Right lobe of liver (tissue), 6 donors: ENCODE measurements at regions of chr2 and their contacts with region 1.

Region 1: GRCh38 chr2:11482723-11483518 is 17.0 kb upstream of the E2F6 start:
- DNase-seq: peak; percentile 55 to 67 (median 63)
- ATAC-seq: peak; percentile 82 to 86 (median 84)
- H3K4me3 ChIP-seq: peak overlapping the region; percentile 38 to 67 (median 48)
- H3K27ac ChIP-seq: peak overlapping the region in 1 of 3 donors; percentile 37
- H3K4me1 ChIP-seq: no peaks in the 10 kb centered on the region
- H3K27me3 ChIP-seq: no peaks in the 10 kb centered on the region
- CTCF ChIP-seq: no peak
- POLR2A ChIP-seq: no peak

Region 2: GRCh38 chr2:11357428-11357972 is 125.4 kb before region 1 on chr2:
- intact Hi-C with region 1: no loop called
- DNase-seq: peak; percentile 70 to 93 (median 93)
- ATAC-seq: peak; percentile 82 to 93 (median 90)
- H3K4me3 ChIP-seq: no peak overlapping the region
- H3K27ac ChIP-seq: peak overlapping the region in 2 of 3 donors; percentile 43 to 81
- H3K4me1 ChIP-seq: peaks cover 0 to 24% (median 7%) of the 10 kb centered on the region in 4 donors
- H3K27me3 ChIP-seq: no peaks in the 10 kb centered on the region
- CTCF ChIP-seq: no peak
- POLR2A ChIP-seq: no peak

Region 3: GRCh38 chr2:11583840-11584524 is 101.1 kb after region 1 on chr2:
- intact Hi-C with region 1: loop called (anchors 5 kb)
- DNase-seq: peak; percentile 64 to 76 (median 71)
- ATAC-seq: peak; percentile 76 to 96 (median 87)
- H3K4me3 ChIP-seq: no peak overlapping the region
- H3K27ac ChIP-seq: no peak overlapping the region
- H3K4me1 ChIP-seq: no peaks in the 10 kb centered on the region
- H3K27me3 ChIP-seq: no peaks in the 10 kb centered on the region
- CTCF ChIP-seq: peak; percentile 84 to 90 (median 88)
- POLR2A ChIP-seq: no peak

Region 4: DNA sequence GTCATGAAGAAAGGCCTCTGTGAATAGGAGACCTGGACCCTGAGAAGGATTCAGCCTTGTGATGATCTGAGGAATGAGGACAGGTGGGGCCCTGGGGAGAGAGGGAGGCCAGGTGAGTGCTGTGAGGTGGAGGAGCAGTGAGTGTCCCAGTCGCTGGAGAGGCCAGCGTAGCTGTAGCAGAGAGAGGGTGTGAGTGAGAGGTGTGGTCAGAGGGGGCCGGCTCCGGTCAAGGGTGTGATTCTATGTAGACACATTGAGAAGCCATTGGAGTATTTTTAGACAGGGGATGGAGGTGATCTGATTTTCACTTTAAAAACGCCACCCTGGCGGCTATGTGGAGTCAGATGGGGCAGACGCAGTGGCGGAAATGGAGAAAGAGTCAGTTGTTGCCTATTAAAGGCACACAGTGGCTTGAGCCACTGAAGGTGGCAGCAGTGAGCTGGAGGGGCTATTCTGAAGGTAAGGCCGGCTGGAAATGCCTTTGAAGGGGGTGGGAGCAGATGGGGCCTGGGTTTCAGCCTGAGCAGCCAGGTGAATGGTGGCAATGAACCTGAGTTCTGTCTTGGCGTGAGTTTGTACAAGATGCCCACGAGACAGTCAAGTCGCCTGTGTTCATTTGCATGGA is 106.5 kb after region 1 on chr2:
- intact Hi-C with region 1: loop called (anchors 5 kb)
- DNase-seq: peak in 1 of 3 donors; percentile 29
- ATAC-seq: no peak
- H3K4me3 ChIP-seq: no peak overlapping the region
- H3K27ac ChIP-seq: no peak overlapping the region
- H3K4me1 ChIP-seq: no peaks in the 10 kb centered on the region
- H3K27me3 ChIP-seq: no peaks in the 10 kb centered on the region
- CTCF ChIP-seq: no peak
- POLR2A ChIP-seq: no peak

Region 5: DNA sequence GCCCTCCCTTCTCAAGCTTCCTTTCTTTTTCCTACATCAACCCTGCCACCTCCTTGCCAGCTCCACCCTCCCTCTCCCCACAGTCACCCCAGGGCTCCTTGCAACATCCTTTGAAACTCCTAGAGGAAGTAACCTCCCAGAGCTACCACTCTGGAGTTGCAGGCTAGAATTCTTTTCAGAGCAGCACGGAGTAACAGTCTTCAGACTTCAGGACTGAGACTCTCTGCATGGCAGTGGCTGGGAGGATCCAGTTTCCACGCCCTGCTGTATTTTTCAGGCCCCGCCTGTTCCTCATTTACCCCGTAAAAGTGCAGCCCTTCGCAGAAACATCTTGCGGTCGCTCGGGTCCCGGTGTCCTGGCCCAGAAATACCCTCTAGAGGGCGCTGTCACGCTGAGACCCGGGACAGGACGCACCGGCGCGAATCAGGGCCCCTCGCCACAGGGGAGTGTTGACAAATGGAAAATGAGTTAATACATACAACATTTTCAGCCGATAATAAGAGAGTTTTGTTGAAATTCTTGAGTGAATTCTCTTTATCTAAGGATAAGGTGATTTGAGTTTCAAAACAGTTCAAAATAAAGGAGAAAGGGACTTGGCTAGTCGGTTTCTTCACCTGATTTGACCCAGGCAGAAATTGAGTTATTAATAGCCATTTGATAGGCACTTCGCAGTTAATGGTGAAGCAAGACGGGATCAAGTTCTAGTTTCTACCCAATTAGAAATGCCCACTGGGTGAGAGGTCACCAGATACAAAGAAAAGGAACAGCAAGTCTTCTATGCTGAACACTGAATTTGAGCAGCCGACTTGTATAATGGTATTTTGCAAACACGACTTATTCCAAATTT is 205.5 kb after region 1 on chr2:
- intact Hi-C with region 1: no loop called
- DNase-seq: peak; percentile 76 to 83 (median 79)
- ATAC-seq: peak; percentile 74 to 79 (median 76)
- H3K4me3 ChIP-seq: no peak overlapping the region
- H3K27ac ChIP-seq: no peak overlapping the region
- H3K4me1 ChIP-seq: peaks cover 0 to 3% (median 1%) of the 10 kb centered on the region in 4 donors
- H3K27me3 ChIP-seq: no peaks in the 10 kb centered on the region
- CTCF ChIP-seq: peak; percentile 82 to 94 (median 92)
- POLR2A ChIP-seq: no peak